Activated CD4-positive, alpha-beta memory T cell treated with anti-CD3 and anti-CD28 coated beads for 36 hours (primary cell): ENCODE measurements at regions of chr18 and their contacts with region 1.

Region 1: GRCh38 chr18:26548429-26549262 is at the start of gene KCTD1:
- DNase-seq: peak; percentile 81
- H3K4me3 Mint-ChIP-seq: peak within 1 kb of the TSS; percentile 75
- H3K27ac Mint-ChIP-seq: no peak within 1 kb of the TSS
- H3K4me1 Mint-ChIP-seq: peaks cover 43% of the 10 kb centered on the region
- H3K27me3 Mint-ChIP-seq: peaks cover 28% of the 10 kb centered on the region
- total RNA-seq, gene KCTD1: 2.5 to 3.2 TPM

Region 2: DNA sequence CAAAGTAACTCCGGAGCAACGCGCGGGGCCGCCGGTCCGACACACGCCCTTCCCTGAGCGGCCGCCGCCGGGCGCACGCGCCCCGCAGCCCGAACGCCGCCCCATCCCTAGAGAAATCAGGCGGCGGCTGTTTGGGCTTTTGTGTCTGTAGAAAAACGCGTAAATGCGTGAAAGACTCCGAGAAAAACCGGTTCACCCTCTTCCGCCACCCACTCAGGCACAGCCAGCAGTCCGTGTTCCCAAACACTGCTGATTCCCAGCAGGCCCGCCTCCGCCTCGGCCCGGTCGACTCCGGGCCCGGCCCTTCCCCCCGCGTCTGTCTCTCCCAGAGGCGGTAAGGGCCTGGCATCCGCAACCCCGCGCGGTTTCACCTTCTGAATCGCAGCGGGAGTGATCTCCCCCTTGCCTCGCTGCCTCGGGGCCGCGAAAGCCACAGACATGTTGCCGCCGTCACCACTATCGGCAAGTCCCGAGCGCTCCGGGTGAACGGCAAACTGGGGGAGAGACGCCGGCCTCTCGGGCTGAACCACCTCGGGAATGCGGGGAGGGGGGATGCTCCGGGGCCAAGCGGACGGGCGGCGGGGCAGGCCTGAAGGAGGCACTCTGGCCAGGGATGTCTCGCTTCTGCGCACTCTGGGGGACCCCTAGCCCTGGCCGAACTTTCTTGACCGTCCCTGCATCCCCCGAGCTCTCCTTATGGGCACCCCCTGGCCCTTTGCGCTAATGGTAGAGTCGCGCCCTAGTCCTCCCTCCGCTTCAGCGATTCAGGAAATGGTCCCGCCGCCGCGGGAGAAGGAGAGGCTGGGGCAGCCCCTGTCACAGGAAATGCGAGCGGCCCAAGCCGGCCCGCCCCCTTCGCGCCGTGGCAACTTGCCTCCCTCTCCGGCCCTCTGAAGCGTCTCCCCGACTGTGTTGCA is 458.3 kb before region 1 on chr18 and contains the start of gene SS18:
- CTCF ChIA-PET with region 1: no interaction called
- POLR2A ChIA-PET with region 1: no interaction called
- intact Hi-C with region 1: loop called (anchors 1 kb)
- DNase-seq: peak; percentile 94
- H3K4me3 Mint-ChIP-seq: peak within 1 kb of the TSS; percentile 89
- H3K27ac Mint-ChIP-seq: peak within 1 kb of the TSS; percentile 93
- H3K4me1 Mint-ChIP-seq: peaks cover 30% of the 10 kb centered on the region
- H3K27me3 Mint-ChIP-seq: no peaks in the 10 kb centered on the region
- total RNA-seq, gene SS18: 49.1 to 51.5 TPM

Region 3: GRCh38 chr18:26342648-26343047 is 206.0 kb before region 1 on chr18:
- CTCF ChIA-PET with region 1: no interaction called
- POLR2A ChIA-PET with region 1: no interaction called
- intact Hi-C with region 1: no loop called
- DNase-seq: no peak
- H3K4me3 Mint-ChIP-seq: no peak overlapping the region
- H3K27ac Mint-ChIP-seq: no peak overlapping the region
- H3K4me1 Mint-ChIP-seq: no peaks in the 10 kb centered on the region
- H3K27me3 Mint-ChIP-seq: no peaks in the 10 kb centered on the region

Region 4: DNA sequence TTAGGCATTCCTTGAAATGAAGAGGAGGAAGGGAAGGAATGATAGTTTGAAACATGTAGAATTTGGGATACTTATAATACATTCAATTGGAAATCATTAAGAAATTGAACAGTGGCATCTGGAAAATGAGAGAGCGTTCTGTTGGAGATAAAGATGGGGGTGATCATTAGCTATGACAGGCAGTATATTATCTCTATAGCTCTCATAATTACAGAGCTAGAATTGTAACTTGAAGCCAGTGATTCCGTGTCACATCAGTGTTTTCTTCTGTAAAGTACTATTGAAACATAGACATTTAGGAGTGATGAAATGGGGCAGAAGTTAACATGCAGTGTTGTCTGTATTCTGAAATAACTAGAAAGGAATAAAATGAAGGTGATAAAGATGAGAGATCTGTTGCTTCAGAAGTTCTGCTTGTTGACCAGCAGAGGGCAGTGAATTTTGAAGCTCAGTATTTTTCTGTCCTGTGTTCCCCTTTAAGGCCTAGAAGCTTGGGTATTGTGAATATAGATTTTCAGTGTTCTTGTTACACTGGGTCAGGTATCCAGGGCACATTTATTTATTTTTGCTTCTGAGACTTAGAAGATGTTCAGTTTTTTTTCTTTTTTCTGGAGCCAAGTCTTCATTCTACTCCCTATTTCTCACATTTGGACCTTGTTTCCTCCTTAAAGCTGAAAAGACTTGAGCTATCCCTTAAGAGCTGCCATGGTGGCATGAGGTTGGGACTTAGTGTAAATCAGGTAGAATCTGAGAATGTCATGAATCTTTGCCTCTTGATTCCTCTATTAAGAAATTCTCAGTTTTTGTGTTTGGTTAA is 165.0 kb before region 1 on chr18:
- CTCF ChIA-PET with region 1: interaction called, 10 read pairs
- POLR2A ChIA-PET with region 1: no interaction called
- intact Hi-C with region 1: loop called (anchors 2 kb)
- DNase-seq: no peak
- H3K4me3 Mint-ChIP-seq: no peak overlapping the region
- H3K27ac Mint-ChIP-seq: no peak overlapping the region
- H3K4me1 Mint-ChIP-seq: no peaks in the 10 kb centered on the region
- H3K27me3 Mint-ChIP-seq: no peaks in the 10 kb centered on the region

Region 5: GRCh38 chr18:26574958-26575864 is 26.6 kb after region 1 on chr18:
- CTCF ChIA-PET with region 1: no interaction called
- POLR2A ChIA-PET with region 1: no interaction called
- intact Hi-C with region 1: loop called (anchors 1 kb)
- DNase-seq: peak; percentile 11
- H3K4me3 Mint-ChIP-seq: peak overlapping the region; percentile 14
- H3K27ac Mint-ChIP-seq: no peak overlapping the region
- H3K4me1 Mint-ChIP-seq: peaks cover 10% of the 10 kb centered on the region
- H3K27me3 Mint-ChIP-seq: peaks cover 33% of the 10 kb centered on the region